Activated CD4-positive, alpha-beta memory T cell treated with anti-CD3 and anti-CD28 coated beads, Interleukin-2, amount 10 ng/mL, durations not matched to agents 7 days and 5 days (primary cell): ENCODE measurements at regions of chr16 and their contacts with region 1.

Region 1: GRCh38 chr16:9008601-9009260 is 45.0 kb upstream of the USP7 start:
- DNase-seq: peak; percentile 73
- H3K4me3 Mint-ChIP-seq: no peak overlapping the region
- H3K27ac Mint-ChIP-seq: no peak overlapping the region
- H3K4me1 Mint-ChIP-seq: peaks cover 4% of the 10 kb centered on the region
- H3K27me3 Mint-ChIP-seq: peaks cover 14% of the 10 kb centered on the region

Region 2: DNA sequence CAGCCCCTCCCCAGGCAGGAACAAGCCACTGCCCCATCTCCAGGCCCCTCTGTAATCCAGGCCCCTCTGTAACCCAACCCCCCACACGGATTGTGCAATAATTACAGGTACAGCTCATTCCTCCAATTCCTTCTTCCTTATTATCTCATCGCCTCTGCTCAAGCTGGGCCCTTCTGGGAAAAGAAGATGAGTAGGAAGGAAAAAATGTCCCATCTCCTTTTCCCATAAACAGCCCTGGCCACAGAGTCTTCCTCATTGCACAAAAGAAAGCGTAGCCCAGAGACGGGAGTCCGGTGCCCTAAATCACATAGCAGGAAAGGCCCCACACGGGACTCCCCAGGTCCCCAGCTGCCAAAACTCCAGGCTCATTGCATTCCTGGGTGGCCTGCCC is 130.2 kb before region 1 on chr16:
- CTCF ChIA-PET with region 1: interaction called, 12 read pairs
- POLR2A ChIA-PET with region 1: no interaction called
- DNase-seq: no peak
- H3K4me3 Mint-ChIP-seq: no peak overlapping the region
- H3K27ac Mint-ChIP-seq: no peak overlapping the region
- H3K4me1 Mint-ChIP-seq: peaks cover 30% of the 10 kb centered on the region
- H3K27me3 Mint-ChIP-seq: no peaks in the 10 kb centered on the region

Region 3: DNA sequence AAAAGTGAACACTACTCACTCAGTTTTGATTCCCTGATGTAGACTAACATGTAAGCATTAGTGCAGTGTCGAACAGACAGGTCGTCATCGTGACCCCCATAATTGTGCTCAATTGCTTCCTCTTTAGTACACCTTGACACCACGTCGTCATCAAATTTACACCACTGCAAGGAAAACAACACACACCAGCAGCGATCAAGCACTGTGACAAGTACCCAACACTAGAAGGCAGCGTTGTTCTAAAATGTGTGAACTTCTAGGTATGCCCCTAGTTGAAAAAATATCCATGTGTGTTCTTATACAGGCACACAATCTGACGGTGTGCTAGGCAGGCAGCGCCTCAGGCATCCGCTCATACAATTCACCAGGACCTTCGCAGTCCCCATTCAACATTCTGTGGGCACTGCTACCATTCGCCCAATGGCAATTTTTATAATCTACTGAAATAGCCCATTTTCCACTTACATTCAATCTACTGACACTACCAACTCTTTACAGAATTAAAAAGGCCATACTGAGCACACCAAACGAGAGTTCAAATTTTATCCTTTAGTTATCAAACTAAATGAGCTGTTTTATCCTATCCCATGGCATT is 103.5 kb before region 1 on chr16:
- CTCF ChIA-PET with region 1: interaction called, 18 read pairs
- POLR2A ChIA-PET with region 1: no interaction called
- DNase-seq: no peak
- H3K4me3 Mint-ChIP-seq: no peak overlapping the region
- H3K27ac Mint-ChIP-seq: no peak overlapping the region
- H3K4me1 Mint-ChIP-seq: peaks cover 25% of the 10 kb centered on the region
- H3K27me3 Mint-ChIP-seq: no peaks in the 10 kb centered on the region

Region 4: GRCh38 chr16:8928467-8928957 is 80.2 kb before region 1 on chr16:
- CTCF ChIA-PET with region 1: interaction called, 11 read pairs
- POLR2A ChIA-PET with region 1: no interaction called
- DNase-seq: no peak
- H3K4me3 Mint-ChIP-seq: no peak overlapping the region
- H3K27ac Mint-ChIP-seq: no peak overlapping the region
- H3K4me1 Mint-ChIP-seq: peaks cover 47% of the 10 kb centered on the region
- H3K27me3 Mint-ChIP-seq: no peaks in the 10 kb centered on the region

Region 5: DNA sequence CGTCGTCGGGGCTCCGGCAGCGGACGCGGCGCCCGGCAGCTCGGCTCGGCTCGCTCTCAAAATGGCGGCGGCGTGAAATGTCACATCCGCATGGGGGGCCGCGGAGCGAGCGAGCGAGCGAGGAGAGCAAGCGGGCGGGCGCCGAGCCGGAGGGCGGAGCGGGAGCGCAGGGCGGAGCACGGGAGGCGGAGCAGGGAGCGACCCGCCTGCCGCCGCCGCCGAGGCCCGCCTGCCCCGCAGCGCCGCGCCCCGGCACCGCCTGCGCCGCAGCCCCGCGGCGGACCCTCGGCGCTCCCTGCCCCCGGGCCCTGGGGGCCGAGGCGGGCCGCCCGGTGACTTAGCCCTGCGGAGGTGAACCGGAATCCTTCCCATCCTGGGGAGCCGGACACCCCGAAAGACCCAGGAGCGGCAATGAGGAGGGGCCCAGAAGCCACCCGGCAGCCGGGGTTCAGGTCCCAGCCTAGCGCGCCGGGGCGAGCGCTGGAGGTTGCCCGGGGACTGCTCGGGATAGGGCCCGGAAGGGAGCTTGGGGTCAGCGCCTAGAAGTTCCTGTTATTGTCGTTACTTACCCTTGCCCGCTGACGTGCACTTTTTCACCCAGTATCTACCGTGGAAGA is 44.8 kb before region 1 on chr16 and contains the start of gene USP7:
- CTCF ChIA-PET with region 1: interaction called, 13 read pairs
- POLR2A ChIA-PET with region 1: no interaction called
- DNase-seq: peak; percentile 94
- H3K4me3 Mint-ChIP-seq: peak within 1 kb of the TSS; percentile 94
- H3K27ac Mint-ChIP-seq: peak within 1 kb of the TSS; percentile 92
- H3K4me1 Mint-ChIP-seq: peaks cover 41% of the 10 kb centered on the region
- H3K27me3 Mint-ChIP-seq: peaks cover 6% of the 10 kb centered on the region
- total RNA-seq, gene USP7: 162 to 166 TPM

Region 6: DNA sequence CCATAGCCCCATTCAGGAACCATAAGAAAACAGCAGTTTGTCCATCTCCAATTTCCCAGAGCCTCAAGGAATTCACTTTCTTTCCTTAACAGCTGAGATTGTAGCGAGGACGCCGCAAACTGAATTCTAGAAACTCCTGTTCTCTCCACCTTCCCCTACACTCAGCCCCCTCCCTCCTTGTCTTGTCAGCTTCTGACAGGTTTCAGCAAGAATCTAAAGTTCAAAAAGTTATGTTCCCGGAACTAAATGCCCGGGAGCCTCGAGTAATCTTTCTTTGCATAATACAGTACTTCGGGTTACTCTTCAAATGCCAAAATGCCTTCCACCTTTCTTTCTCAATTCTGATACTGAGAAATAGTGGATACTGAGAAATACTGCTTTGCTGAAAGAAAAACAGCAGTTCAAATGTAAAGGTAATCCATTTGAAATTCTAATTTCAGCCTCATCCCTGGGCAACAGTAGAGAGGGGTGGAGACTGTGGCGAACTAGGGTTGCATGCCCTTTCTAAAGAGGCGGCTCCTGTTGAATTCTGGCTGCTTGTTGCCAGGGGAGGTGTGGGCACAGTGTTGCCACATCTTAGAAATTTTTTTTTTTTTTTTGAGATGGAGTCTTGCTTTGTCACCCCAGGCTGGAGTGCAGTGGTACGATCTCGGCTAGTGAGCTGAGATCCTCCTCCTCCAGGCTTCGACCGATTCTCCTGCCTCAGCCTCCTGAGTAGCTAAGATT is 18.5 kb after region 1 on chr16:
- CTCF ChIA-PET with region 1: interaction called, 10 read pairs
- POLR2A ChIA-PET with region 1: no interaction called
- DNase-seq: no peak
- H3K4me3 Mint-ChIP-seq: no peak overlapping the region
- H3K27ac Mint-ChIP-seq: no peak overlapping the region
- H3K4me1 Mint-ChIP-seq: no peaks in the 10 kb centered on the region
- H3K27me3 Mint-ChIP-seq: no peaks in the 10 kb centered on the region

Region 7: DNA sequence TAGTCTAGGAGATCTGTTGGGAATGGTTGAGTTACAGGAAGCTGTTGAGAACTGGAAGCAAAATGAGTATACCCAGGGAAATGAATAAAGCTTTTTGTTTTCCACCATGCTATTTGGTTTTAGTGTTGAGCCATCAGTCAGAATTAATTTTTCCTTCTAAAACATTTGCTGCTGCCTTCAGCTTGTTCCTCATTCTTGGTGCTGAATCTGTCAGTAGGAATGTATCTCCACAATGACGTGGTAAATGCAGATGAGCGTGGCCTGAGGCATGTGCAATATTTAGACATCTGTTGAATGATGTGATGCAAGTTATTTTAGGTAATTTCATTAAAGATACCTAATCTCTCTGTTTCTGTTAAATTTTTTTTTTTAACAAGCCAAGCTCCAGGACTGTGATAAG is 93.6 kb after region 1 on chr16:
- CTCF ChIA-PET with region 1: interaction called, 14 read pairs
- POLR2A ChIA-PET with region 1: no interaction called
- DNase-seq: no peak
- H3K4me3 Mint-ChIP-seq: no peak overlapping the region
- H3K27ac Mint-ChIP-seq: peak overlapping the region; percentile 75
- H3K4me1 Mint-ChIP-seq: peaks cover 90% of the 10 kb centered on the region
- H3K27me3 Mint-ChIP-seq: no peaks in the 10 kb centered on the region

Region 8: DNA sequence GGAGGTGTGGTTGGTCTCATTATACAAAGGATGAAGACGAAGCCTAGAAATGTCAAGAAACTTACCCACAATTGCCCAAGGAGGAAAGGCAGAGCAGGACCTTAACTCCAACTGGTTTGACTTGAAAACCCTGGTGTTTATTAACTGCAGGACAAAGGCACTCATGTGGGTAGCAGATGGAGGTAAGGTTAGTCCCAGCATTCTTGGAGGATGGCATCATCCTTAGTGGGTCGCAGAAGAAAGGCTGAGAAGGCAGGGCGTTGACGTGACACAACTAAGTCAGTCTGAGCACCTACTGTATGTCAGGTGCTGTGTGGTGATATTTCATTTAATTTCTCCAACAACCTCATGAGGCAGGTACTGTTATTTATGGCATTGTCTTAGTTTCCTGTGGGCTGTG is 184.0 kb after region 1 on chr16:
- CTCF ChIA-PET with region 1: no interaction called
- POLR2A ChIA-PET with region 1: no interaction called
- DNase-seq: no peak
- H3K4me3 Mint-ChIP-seq: no peak overlapping the region
- H3K27ac Mint-ChIP-seq: no peak overlapping the region
- H3K4me1 Mint-ChIP-seq: no peaks in the 10 kb centered on the region
- H3K27me3 Mint-ChIP-seq: no peaks in the 10 kb centered on the region

Region 9: DNA sequence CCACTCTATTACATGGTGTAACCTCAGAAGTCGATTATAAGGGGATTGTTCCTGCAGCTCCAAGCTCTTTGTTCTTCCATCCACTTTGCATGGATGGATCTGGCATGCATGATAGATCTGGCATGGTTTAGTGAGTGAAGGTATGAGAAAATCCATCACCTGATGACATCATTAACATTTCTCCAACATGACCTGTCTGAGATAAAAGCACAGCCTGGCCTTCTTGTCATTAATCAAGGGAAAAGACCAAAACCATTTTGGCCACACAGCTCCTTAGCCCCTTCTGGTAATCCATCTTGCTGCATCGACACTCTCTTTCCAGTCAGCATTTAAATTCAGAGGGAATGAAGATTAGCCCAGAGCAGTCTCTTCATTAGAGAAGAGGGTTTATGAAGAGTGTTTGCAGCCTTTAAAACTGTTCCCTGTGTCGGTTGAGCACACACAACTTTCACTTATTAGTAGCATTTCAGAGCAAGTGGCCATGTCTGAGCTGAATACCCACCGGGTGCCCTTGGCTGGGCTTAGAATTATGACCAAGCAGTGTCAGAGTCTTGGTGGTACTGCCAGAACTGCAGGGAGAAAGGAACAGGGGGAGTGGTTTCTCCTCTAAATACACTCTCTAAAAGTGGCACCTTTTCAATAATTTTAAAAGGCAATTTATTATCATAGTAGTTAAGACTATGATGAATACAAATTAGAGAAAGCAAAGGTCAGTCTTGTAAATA is 328.7 kb after region 1 on chr16:
- CTCF ChIA-PET with region 1: no interaction called
- POLR2A ChIA-PET with region 1: no interaction called
- DNase-seq: no peak
- H3K4me3 Mint-ChIP-seq: no peak overlapping the region
- H3K27ac Mint-ChIP-seq: no peak overlapping the region
- H3K4me1 Mint-ChIP-seq: no peaks in the 10 kb centered on the region
- H3K27me3 Mint-ChIP-seq: no peaks in the 10 kb centered on the region